ENCODE measurements at regions of chr9 and their contacts with region 1.

Region 1: GRCh38 chr9:35324966-35325365 is 163.2 kb downstream of the UNC13B start:
- DNase-seq: no peak
- ATAC-seq: no peak
- H3K4me3 ChIP-seq: no peak overlapping the region
- H3K4me3 Mint-ChIP-seq: no peak overlapping the region
- H3K27ac ChIP-seq: no peak overlapping the region
- H3K27ac Mint-ChIP-seq: no peak overlapping the region
- H3K4me1 ChIP-seq: no peaks in the 10 kb centered on the region
- H3K4me1 Mint-ChIP-seq: no peaks in the 10 kb centered on the region
- H3K27me3 ChIP-seq: no peaks in the 10 kb centered on the region
- H3K27me3 Mint-ChIP-seq: peaks cover 4% of the 10 kb centered on the region
- CTCF ChIP-seq: no peak

Region 2: GRCh38 chr9:35350827-35351549 is 26.0 kb after region 1 on chr9:
- CTCF ChIA-PET with region 1: no interaction called
- POLR2A ChIA-PET with region 1: no interaction called
- intact Hi-C with region 1: loop called in 1 of 2 experiments (anchors 1 kb)
- DNase-seq: no peak
- ATAC-seq: no peak
- H3K4me3 ChIP-seq: no peak overlapping the region
- H3K4me3 Mint-ChIP-seq: no peak overlapping the region
- H3K27ac ChIP-seq: no peak overlapping the region
- H3K27ac Mint-ChIP-seq: no peak overlapping the region
- H3K4me1 ChIP-seq: no peaks in the 10 kb centered on the region
- H3K4me1 Mint-ChIP-seq: no peaks in the 10 kb centered on the region
- H3K27me3 ChIP-seq: no peaks in the 10 kb centered on the region
- H3K27me3 Mint-ChIP-seq: no peaks in the 10 kb centered on the region
- CTCF ChIP-seq: no peak

Measured in CD4-positive, alpha-beta T cell (primary cell).